Heart left ventricle (tissue), 16 donors: ENCODE measurements at regions of chrX and their contacts with region 1.

Region 1: GRCh38 chrX:65667503-65668376 is at the start of gene MSN:
- DNase-seq: peak; percentile 84 to 92 (median 87)
- ATAC-seq: peak; percentile 72 to 93 (median 90)
- H3K4me3 ChIP-seq: peak within 1 kb of the TSS; percentile 37 to 99 (median 84)
- H3K27ac ChIP-seq: peak within 1 kb of the TSS; percentile 93 to 100 (median 96)
- H3K4me1 ChIP-seq: peaks cover 0 to 45% (median 24%) of the 10 kb centered on the region in 12 donors
- H3K27me3 ChIP-seq: peaks cover 0 to 3% (median 0%) of the 10 kb centered on the region in 9 donors
- CTCF ChIP-seq: peak in 3 of 12 donors; percentile 6 to 23 (median 8)
- POLR2A ChIP-seq: peak in 1 of 2 donors; percentile 79
- total RNA-seq, gene MSN: 99.6 to 298 (median 153) TPM

Region 2: DNA sequence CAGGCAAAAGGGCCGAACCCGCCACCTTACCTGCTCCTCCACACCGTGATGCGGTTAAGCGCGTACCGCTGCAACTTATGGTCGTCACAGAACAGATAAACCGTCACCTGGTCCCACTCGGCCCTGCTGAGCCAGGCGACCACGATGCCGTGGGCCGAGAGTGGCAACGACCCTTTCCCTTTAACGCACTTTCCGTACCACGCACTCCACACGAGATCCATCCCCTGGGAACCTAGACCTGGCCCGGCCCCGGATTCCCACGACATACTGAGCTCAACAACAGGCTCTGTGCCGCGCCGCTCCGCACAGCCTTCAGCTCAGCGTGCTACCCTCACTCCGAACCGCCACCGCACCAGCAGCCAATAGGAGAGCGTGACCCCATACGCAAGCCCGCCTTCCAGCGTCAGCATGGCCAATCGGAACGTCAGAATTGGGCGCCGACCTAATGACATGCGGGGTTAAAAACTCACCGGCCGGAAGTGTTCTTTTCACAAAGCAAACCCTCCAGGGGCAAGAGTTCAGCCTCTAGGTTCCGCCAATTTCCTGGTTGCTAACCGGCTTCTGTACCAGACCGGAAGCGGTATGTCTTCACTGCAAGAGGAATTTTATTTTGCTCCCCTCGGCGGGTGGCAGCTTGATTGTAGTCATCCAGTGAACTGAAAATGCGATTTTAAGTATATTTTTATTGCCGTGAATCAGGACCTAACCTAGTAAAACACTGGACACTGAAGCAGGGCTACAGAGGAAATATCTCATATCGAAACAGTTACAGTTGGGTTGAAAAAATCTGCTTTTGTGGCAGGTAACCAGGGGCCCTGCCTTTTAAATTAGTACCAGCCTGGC is 133.1 kb before region 1 on chrX and contains the start of gene LAS1L:
- intact Hi-C with region 1: no loop called
- DNase-seq: peak; percentile 90 to 93 (median 92)
- ATAC-seq: peak; percentile 99 to 100 (median 100)
- H3K4me3 ChIP-seq: peak within 1 kb of the TSS; percentile 52 to 99 (median 78)
- H3K27ac ChIP-seq: peak within 1 kb of the TSS; percentile 24 to 76 (median 58)
- H3K4me1 ChIP-seq: peaks cover 0 to 13% (median 8%) of the 10 kb centered on the region in 12 donors
- H3K27me3 ChIP-seq: peaks cover 0 to 23% (median 0%) of the 10 kb centered on the region in 9 donors
- CTCF ChIP-seq: no peak
- POLR2A ChIP-seq: peak in 1 of 2 donors; percentile 42
- total RNA-seq, gene LAS1L: 6.0 to 17.2 (median 12.8) TPM

Region 3: GRCh38 chrX:65601530-65602220 is 66.1 kb before region 1 on chrX:
- intact Hi-C with region 1: loop called in 5 of 10 experiments (anchors 5 to 10 kb)
- DNase-seq: peak; percentile 83 to 92 (median 89)
- ATAC-seq: peak; percentile 93 to 98 (median 96)
- H3K4me3 ChIP-seq: no peak overlapping the region
- H3K27ac ChIP-seq: peak overlapping the region; percentile 69 to 95 (median 84)
- H3K4me1 ChIP-seq: peaks cover 0 to 52% (median 23%) of the 10 kb centered on the region in 12 donors
- H3K27me3 ChIP-seq: no peaks in the 10 kb centered on the region
- CTCF ChIP-seq: peak in 1 of 12 donors; percentile 36
- POLR2A ChIP-seq: no peak

Region 4: GRCh38 chrX:65697915-65698796 is 30.4 kb after region 1 on chrX:
- intact Hi-C with region 1: loop called in 2 of 10 experiments (anchors 2 to 5 kb)
- DNase-seq: peak; percentile 61 to 79 (median 71)
- ATAC-seq: peak; percentile 59 to 83 (median 70)
- H3K4me3 ChIP-seq: peak overlapping the region in 3 of 12 donors; percentile 6 to 28 (median 12)
- H3K27ac ChIP-seq: peak overlapping the region; percentile 7 to 93 (median 78)
- H3K4me1 ChIP-seq: peaks cover 0 to 98% (median 76%) of the 10 kb centered on the region in 12 donors
- H3K27me3 ChIP-seq: no peaks in the 10 kb centered on the region
- CTCF ChIP-seq: no peak
- POLR2A ChIP-seq: no peak

Region 5: DNA sequence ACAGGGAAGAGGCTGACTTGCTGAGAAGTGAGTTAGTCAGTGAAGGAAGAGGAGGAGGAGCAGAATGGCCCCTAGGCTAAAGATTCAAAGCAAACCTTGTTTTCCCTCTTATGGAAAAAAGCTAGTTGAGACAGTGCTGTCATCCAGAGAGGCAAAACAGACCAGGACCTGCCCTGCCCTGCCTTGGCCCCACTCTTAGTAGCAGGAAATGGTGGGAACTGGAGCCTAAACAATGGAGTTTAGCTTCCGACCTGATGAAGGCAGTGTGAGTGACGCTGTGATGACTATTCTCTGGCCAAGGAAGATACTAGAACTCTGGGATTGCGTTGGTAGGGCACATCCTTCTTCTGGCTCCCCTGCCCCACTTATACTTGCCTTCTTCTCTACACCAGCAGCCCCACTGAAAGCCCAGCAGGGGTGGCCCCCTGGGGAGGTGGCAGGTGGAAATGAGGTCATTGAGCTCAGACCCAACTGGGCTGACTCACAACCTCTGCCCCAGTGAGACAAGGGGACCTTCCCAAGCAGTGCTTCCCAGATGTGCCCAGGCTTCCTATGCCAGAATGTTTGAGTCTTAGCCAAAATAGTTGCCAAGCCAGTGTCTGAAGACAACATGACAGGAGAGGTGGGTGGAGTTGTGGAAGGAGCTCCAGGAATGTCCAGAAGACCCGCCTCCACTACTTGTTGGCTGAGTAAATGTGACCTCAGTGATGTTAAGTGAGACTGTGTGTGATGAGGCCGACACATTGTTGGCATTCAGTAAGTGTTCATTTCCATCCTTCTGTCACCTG is 38.5 kb after region 1 on chrX:
- intact Hi-C with region 1: loop called in 6 of 10 experiments (anchors 2 to 5 kb)
- DNase-seq: peak; percentile 45 to 79 (median 61)
- ATAC-seq: peak; percentile 84 to 92 (median 86)
- H3K4me3 ChIP-seq: no peak overlapping the region
- H3K27ac ChIP-seq: peak overlapping the region; percentile 61 to 85 (median 78)
- H3K4me1 ChIP-seq: peaks cover 0 to 82% (median 50%) of the 10 kb centered on the region in 12 donors
- H3K27me3 ChIP-seq: no peaks in the 10 kb centered on the region
- CTCF ChIP-seq: no peak
- POLR2A ChIP-seq: no peak

Region 6: GRCh38 chrX:65723706-65724105 is 56.0 kb after region 1 on chrX:
- intact Hi-C with region 1: loop called in 1 of 10 experiments (anchors 10 kb)
- DNase-seq: no peak
- ATAC-seq: peak in 1 of 4 donors; percentile 25
- H3K4me3 ChIP-seq: no peak overlapping the region
- H3K27ac ChIP-seq: peak overlapping the region in 3 of 12 donors; percentile 24 to 81 (median 37)
- H3K4me1 ChIP-seq: peaks cover 0 to 66% (median 17%) of the 10 kb centered on the region in 12 donors
- H3K27me3 ChIP-seq: peaks cover 0 to 6% (median 0%) of the 10 kb centered on the region in 9 donors
- CTCF ChIP-seq: no peak
- POLR2A ChIP-seq: no peak